ENCODE measurements at regions of chr2 and their contacts with region 1.

Region 1: DNA sequence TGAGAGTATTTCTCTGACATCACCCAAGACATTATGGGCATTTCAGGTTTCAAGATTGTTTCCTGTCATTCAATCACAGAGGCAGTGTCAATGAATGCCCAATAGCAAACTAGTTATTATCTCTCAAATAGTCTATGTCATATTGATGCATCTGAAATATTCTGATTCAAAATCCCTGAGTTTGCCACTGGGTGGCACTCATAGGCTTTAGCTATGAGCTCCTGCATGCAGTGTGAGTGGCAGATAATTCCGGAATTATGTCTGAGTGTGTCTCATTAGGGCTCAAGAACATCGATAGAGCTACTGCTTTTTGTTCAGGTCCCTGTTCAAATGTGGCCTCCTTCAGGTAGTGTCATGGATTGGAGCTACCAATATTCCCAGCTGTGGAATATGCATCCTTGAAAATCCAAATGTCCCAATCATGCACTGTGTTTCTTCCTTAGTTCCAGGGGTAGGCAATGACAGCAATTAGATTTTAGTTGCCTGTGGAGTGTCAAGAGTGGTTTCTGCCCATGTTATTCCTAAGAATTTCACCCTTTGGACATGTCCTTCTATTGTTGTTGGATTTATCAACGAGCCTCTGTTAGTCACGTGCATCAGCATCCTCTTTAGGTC is 7.8 kb upstream of the OR6B3 start:
- DNase-seq: no peak

Region 2: DNA sequence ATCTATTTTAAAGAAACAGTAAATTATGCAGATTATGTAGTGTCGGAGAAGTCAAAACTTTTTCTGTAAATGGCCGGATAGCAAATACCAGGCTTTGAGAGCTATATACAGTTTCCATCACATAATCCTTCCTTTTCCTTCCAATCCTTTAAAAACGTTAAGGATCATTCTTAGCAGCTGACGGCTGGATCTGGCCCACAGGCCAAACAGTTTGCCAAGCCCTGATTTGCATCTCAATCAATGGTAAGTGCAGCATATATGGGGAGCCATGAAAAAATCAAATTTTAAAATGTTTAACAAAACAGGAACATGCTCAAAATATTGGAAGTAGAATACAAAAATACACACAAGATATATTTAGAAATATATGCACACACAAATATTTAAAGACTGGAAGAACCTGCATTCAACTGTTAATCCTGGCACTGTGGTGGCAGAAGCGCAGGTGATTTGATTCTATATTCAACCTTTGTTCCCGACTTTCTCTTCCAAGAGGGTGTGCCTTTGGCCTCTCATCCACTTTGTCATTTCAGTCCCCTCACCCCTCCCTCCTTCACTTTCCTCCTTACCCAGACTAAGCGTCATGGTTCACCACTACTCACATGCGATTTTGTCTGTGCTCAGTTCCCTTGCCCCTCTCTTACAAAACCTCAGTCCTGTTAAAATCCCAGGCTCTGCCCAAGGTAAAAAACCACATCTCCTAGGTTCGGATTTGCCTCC is 63.2 kb before region 1 on chr2:
- intact Hi-C with region 1: no loop called
- DNase-seq: no peak

Region 3: GRCh38 chr2:240021488-240022104 is 39.5 kb before region 1 on chr2:
- intact Hi-C with region 1: no loop called
- DNase-seq: no peak

Region 4: GRCh38 chr2:240143801-240144648 is 82.9 kb after region 1 on chr2:
- intact Hi-C with region 1: loop called (anchors 2 kb)
- DNase-seq: peak; percentile 88

Region 5: DNA sequence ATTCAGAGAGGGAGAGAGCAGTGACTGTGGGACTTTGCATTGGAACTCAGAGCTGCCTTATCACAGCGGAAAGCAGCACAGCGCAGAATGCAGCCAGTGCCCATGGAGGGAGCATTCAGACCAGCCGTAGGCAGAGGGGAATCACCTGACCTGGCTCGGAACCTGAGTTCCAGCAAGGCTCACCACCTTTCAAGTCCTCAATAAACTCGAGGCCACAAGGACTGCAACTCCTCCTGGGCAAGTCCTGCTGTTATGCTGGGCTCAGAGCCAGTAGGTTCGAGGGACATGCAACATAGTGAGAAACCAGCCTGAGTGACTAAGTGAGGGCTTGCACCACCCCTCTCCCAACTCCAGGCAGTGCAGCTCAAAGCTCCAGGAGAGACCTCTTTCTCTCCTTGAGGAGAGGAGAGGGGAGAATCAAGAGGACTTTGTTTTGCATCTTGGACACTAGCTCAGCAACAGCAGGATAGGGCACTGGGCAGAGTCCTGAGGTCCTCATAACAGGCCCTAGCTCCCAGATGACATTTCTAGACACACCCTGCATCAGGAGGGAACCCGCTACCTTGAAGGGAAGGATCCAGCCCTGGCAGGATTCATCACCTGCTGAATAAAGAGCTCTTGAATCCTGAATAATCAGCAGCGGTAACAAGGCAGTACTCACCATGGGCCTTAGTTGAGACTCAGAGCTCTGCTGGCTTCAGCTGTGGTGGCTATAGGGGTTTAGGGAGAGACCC is 216.2 kb after region 1 on chr2:
- intact Hi-C with region 1: no loop called
- DNase-seq: peak; percentile 51

Measured in cardiac septum (tissue), 1 donor.